Left cardiac atrium (tissue), 4 donors: ENCODE measurements at regions of chr21 and their contacts with region 1.

Region 1: DNA sequence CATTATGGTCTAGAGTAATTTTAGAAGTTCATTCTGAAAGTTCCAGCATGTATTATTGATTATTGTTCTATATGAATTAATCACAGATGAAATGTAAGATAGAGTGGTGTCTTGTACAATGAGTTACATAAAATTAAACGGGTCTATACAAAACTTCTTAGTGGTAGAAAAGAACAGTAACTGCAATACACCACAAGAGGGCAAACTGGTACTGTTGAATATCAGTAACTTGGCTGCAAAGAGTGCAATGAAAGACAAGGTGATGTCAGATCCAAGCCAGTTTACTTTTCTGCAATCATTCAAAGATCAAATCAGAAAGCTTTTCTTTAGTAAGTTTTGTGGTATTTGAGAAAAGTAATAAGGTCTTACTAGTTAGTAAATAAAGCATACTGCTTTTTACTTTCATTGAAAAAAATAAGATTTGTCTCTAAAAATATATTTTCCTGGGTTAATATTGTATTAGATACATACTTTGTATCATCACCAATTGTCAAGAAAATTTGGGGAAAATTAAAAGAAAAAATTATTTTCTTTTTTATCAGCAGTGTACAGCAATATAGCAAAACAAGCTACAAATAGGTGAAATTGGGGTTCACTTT is 66.4 kb upstream of the BTG3 start:
- DNase-seq: no peak
- ATAC-seq: peak; percentile 81 to 83

Region 2: DNA sequence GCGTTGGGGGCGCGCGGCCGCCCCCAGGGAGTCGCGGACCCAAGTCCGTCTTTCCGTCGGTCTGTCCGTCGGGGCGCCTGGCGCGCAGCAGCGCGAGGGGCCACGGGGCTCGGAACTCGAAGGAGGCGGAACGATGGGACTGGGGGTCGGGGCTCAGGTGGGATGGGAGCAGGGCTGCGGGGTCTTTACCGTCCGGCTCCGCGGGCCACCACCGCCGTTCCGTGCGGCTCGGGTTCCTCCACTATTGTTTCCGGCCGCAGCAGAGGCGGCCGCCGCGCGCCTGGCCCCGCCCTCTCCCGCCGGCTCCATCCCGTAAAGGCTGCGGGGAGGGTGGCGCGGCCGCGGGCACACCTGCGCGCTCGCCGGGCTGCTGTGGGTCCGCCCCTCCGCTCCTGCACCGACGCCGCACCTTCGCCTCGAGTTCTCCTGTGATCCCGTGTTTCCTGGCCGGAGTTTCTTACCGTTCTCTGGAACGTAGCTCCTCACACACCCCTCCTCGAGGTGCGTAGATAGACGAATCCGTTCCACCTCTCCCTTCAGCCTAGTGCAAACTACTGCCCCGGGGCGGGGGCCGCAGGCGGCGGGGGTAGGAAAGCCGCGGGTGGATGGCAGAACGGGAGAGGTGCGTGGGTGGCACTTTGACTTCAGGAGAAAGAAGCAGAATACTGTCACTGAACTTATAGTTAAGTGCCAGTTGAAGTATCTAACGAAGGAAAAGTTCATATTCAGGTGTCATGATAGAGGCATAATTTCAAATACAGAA is 140.2 kb after region 1 on chr21 and contains the start of gene C21orf91:
- intact Hi-C with region 1: loop called in 1 of 2 experiments (anchors 10 kb)
- DNase-seq: peak; percentile 93
- ATAC-seq: peak; percentile 97 to 99
- total RNA-seq, gene C21orf91: 9.0 to 9.2 TPM

Region 3: GRCh38 chr21:17903029-17903806 is 224.1 kb after region 1 on chr21:
- intact Hi-C with region 1: loop called (anchors 1 to 2 kb)
- DNase-seq: no peak
- ATAC-seq: peak in 1 of 2 donors; percentile 52

Region 4: GRCh38 chr21:17925000-17925610 is 246.0 kb after region 1 on chr21:
- intact Hi-C with region 1: loop called in 1 of 2 experiments (anchors 2 kb)
- DNase-seq: no peak
- ATAC-seq: peak; percentile 70 to 85